Endothelial cell of umbilical vein (primary cell): ENCODE measurements at regions of chr13 and their contacts with region 1.

Region 1: GRCh38 chr13:46321494-46322225 is 65.4 kb downstream of the RUBCNL start:
- DNase-seq: peak; percentile 63
- H3K4me3 ChIP-seq: no peak overlapping the region
- H3K27ac ChIP-seq: no peak overlapping the region
- H3K4me1 ChIP-seq: no peaks in the 10 kb centered on the region
- H3K27me3 ChIP-seq: peaks cover 9 to 12% of the 10 kb centered on the region in 2 experiments
- CTCF ChIP-seq: peak; percentile 68 to 74
- POLR2A ChIP-seq: no peak

Region 2: DNA sequence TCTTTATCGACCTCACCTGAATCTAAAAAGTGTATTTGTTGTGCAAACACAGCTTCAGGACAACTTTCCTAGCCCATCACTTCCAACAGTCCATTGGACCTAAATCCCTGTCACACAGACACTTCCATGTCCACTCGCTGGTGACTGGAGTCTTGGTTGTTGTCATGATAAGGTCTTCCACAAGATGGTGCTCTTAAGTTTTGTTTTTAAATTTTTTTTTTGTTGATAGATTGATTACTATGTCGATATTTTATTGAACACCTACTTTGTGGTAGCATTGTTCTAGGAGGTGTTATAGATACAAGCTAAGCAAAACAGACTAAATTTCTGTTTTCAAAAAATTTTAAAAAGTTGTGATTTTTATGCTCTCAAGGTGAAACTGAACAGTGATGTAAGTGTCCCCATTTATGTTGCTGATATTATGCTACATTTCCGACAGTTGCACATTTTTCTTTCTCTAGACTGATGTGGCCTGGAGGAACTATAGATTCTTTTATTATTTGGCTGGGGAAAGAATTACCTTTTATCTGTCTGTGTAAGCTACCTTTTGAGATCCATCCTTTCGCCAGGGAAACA is 698.1 kb before region 1 on chr13:
- CTCF ChIA-PET with region 1: interaction called, 9 read pairs
- POLR2A ChIA-PET with region 1: no interaction called
- dilution Hi-C with region 1: no loop called
- intact Hi-C with region 1: loop called (anchors 1 kb)
- DNase-seq: peak; percentile 31
- H3K4me3 ChIP-seq: no peak overlapping the region
- H3K27ac ChIP-seq: no peak overlapping the region
- H3K4me1 ChIP-seq: no peaks in the 10 kb centered on the region
- H3K27me3 ChIP-seq: peaks cover 2 to 16% of the 10 kb centered on the region in 2 experiments
- CTCF ChIP-seq: peak; percentile 19 to 36
- POLR2A ChIP-seq: no peak

Region 3: DNA sequence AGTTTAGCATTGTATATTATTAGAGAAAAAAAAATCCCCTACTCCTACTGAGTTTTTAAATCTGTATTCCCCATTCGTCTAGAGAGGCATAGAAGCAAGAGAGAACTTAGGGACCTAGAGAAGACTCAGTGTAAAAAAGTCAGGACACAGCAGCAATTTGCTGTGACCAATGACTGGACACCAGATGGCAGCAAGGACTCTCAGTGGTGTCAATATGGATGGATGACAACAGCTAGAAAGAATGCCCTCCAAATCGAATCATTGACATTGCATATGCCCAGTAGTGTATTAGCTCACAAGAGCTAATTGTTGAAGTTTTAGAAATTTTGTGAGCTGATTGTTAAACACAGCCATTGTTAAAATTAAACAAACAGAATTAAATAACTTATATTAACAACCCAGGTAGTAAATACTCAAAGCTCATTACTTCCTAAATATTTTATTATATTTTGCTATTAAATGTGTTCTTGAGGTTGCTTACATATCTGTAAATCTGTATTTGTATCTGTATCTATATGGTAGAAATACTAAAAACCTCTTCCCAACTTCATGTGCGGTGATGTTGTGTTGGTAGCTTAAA is 514.0 kb before region 1 on chr13:
- CTCF ChIA-PET with region 1: interaction called, 24 read pairs
- POLR2A ChIA-PET with region 1: no interaction called
- dilution Hi-C with region 1: no loop called
- intact Hi-C with region 1: loop called (anchors 1 kb)
- DNase-seq: peak; percentile 63
- H3K4me3 ChIP-seq: no peak overlapping the region
- H3K27ac ChIP-seq: no peak overlapping the region
- H3K4me1 ChIP-seq: no peaks in the 10 kb centered on the region
- H3K27me3 ChIP-seq: peaks cover 2 to 4% of the 10 kb centered on the region in 2 experiments
- CTCF ChIP-seq: peak; percentile 53 to 60
- POLR2A ChIP-seq: no peak

Region 4: DNA sequence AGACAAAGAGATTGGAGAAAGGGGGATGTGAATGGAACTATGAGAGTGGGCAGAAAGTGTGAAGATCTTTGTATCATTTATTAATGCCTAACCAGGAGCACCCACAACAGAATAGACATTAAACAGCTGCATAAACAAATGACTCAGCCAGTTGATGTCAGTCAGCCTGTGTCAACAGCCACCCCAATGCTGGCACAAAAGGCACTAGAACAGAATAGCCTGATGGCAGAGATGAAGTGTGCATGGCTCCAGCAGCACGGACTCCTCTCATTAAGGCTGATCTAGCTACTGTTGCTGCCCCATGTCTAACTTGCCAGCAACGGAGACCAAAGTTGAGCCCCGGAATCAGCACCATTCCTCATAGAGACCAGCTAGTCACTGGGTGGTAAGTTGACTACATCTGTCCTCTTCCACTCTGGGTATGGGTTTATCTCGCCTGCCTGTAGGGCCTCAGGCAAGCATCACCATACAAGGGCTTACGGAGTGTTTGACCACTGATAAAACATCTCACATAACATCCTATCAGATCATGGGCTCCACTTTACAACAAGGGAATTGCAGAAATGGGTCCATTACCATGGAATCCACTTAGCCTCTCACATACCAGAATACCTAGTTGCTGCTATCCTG is 224.5 kb before region 1 on chr13:
- CTCF ChIA-PET with region 1: no interaction called
- POLR2A ChIA-PET with region 1: no interaction called
- dilution Hi-C with region 1: no loop called
- intact Hi-C with region 1: no loop called
- DNase-seq: no peak
- H3K4me3 ChIP-seq: no peak overlapping the region
- H3K27ac ChIP-seq: no peak overlapping the region
- H3K4me1 ChIP-seq: no peaks in the 10 kb centered on the region
- H3K27me3 ChIP-seq: peaks cover 11 to 13% of the 10 kb centered on the region in 2 experiments
- CTCF ChIP-seq: no peak
- POLR2A ChIP-seq: no peak

Region 5: DNA sequence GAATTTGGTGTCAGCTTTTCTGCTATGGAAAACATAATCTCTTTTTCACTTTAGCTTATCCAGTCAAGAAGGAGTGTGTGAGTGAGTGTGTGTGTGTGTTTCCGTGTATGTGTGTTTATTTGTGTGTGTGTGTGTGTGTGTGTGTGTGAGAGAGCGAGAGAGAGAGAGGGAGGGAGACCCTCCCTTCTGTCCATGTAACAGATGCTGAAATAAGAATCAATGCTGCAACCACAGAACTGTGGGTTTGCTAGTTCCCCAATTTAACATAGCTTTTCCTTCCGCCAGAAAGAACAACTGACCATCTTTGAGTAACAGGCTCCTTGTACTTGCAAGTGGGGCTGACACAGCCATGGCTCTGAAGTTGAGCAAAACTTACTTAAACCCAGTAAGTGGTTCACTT is 144.9 kb before region 1 on chr13:
- CTCF ChIA-PET with region 1: interaction called, 13 read pairs
- POLR2A ChIA-PET with region 1: no interaction called
- dilution Hi-C with region 1: no loop called
- intact Hi-C with region 1: no loop called
- DNase-seq: no peak
- H3K4me3 ChIP-seq: no peak overlapping the region
- H3K27ac ChIP-seq: no peak overlapping the region
- H3K4me1 ChIP-seq: no peaks in the 10 kb centered on the region
- H3K27me3 ChIP-seq: peaks cover 2 to 27% of the 10 kb centered on the region in 2 experiments
- CTCF ChIP-seq: no peak
- POLR2A ChIP-seq: no peak

Region 6: GRCh38 chr13:46288570-46289259 is 32.9 kb before region 1 on chr13:
- CTCF ChIA-PET with region 1: interaction called, 10 read pairs
- POLR2A ChIA-PET with region 1: no interaction called
- dilution Hi-C with region 1: no loop called
- intact Hi-C with region 1: no loop called
- DNase-seq: peak; percentile 50
- H3K4me3 ChIP-seq: no peak overlapping the region
- H3K27ac ChIP-seq: no peak overlapping the region
- H3K4me1 ChIP-seq: no peaks in the 10 kb centered on the region
- H3K27me3 ChIP-seq: no peaks in the 10 kb centered on the region
- CTCF ChIP-seq: peak; percentile 55 to 73
- POLR2A ChIP-seq: no peak

Region 7: GRCh38 chr13:46295491-46296114 is 26.1 kb before region 1 on chr13:
- CTCF ChIA-PET with region 1: interaction called, 11 read pairs
- POLR2A ChIA-PET with region 1: no interaction called
- dilution Hi-C with region 1: no loop called
- intact Hi-C with region 1: no loop called
- DNase-seq: peak; percentile 48
- H3K4me3 ChIP-seq: no peak overlapping the region
- H3K27ac ChIP-seq: no peak overlapping the region
- H3K4me1 ChIP-seq: peaks cover 29% of the 10 kb centered on the region
- H3K27me3 ChIP-seq: no peaks in the 10 kb centered on the region
- CTCF ChIP-seq: no peak
- POLR2A ChIP-seq: no peak

Region 8: DNA sequence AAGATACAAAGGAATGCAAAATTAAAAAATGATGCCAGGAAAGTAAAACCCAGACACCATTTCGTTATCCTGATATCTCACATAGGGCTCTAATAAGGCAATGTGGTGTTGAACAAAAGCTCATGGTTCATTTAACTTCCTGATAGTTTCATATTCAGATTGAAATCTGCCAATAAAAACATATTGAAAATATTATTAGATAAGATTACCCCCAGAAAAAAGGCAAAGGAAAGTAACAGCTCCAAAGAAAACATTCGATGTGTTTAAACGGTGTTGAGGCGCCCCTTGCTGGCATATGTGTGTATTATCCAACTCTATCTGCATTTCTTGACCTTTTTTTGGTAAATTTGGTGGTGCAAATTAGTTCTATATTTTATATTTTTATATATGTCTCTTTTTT is 399.4 kb after region 1 on chr13:
- CTCF ChIA-PET with region 1: interaction called, 6 read pairs
- POLR2A ChIA-PET with region 1: no interaction called
- dilution Hi-C with region 1: no loop called
- intact Hi-C with region 1: loop called (anchors 10 kb)
- DNase-seq: peak; percentile 83
- H3K4me3 ChIP-seq: no peak overlapping the region
- H3K27ac ChIP-seq: no peak overlapping the region
- H3K4me1 ChIP-seq: peaks cover 12% of the 10 kb centered on the region
- H3K27me3 ChIP-seq: peaks cover 0 to 9% of the 10 kb centered on the region in 2 experiments
- CTCF ChIP-seq: peak; percentile 36 to 51
- POLR2A ChIP-seq: no peak

Region 9: GRCh38 chr13:46831588-46832194 is 510.0 kb after region 1 on chr13:
- CTCF ChIA-PET with region 1: no interaction called
- POLR2A ChIA-PET with region 1: no interaction called
- dilution Hi-C with region 1: no loop called
- intact Hi-C with region 1: no loop called
- DNase-seq: peak; percentile 60
- H3K4me3 ChIP-seq: no peak overlapping the region
- H3K27ac ChIP-seq: no peak overlapping the region
- H3K4me1 ChIP-seq: no peaks in the 10 kb centered on the region
- H3K27me3 ChIP-seq: peaks cover 0 to 6% of the 10 kb centered on the region in 2 experiments
- CTCF ChIP-seq: peak; percentile 39 to 51
- POLR2A ChIP-seq: no peak